ENCODE measurements at regions of chr1 and their contacts with region 1.

Region 1: GRCh38 chr1:165597883-165598675 is 33.0 kb upstream of the MGST3 start:
- DNase-seq: peak; percentile 71 to 93 (median 79)
- ATAC-seq: peak; percentile 98
- H3K4me3 ChIP-seq: peak overlapping the region; percentile 70
- H3K4me3 Mint-ChIP-seq: peak overlapping the region; percentile 86 to 95 (median 92)
- H3K27ac ChIP-seq: peak overlapping the region; percentile 31
- H3K27ac Mint-ChIP-seq: peak overlapping the region in 8 of 9 donors; percentile 28 to 94 (median 85)
- H3K4me1 ChIP-seq: peaks cover 11 to 12% of the 10 kb centered on the region in 2 donors
- H3K4me1 Mint-ChIP-seq: peaks cover 21 to 28% (median 26%) of the 10 kb centered on the region in 7 donors
- H3K27me3 ChIP-seq: peaks cover 6 to 16% of the 10 kb centered on the region in 2 donors
- H3K27me3 Mint-ChIP-seq: peaks cover 24 to 55% (median 47%) of the 10 kb centered on the region in 5 donors

Region 2: DNA sequence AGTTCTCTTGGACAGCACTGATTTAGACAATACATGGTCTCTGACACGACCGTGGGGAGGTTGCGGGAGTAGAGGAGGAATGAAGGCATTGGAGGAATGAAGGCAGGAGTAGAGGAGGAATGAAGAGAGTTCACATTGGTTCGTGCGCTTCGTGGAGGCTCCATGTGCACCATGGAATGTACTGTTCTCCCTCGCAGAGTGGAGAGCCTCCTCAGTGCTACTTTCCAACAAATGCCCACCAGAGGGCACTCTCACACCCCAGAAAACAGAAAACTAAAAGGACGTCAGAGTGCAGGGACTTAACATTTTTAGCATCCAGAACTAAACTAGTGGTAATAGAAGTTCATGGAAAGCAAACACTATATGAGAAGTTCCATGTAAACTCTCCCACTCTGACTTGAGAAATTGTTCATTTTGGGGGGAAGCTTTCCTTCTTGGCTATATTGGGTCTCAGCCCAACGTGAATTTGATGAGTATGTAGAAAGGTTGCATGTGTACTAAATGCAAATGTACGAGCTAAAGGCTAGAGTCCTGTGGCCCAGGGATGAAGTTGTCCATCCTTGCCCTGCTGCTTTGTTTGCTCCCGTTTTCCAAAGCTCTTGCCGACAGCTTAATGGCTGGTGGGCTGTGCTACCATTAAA is 453.2 kb before region 1 on chr1:
- CTCF ChIA-PET with region 1: interaction called, 4 read pairs
- POLR2A ChIA-PET with region 1: no interaction called
- intact Hi-C with region 1: loop called in 1 of 2 experiments (anchors 1 kb)
- DNase-seq: peak in 1 of 9 donors; percentile 1
- ATAC-seq: no peak
- H3K4me3 ChIP-seq: no peak overlapping the region
- H3K4me3 Mint-ChIP-seq: no peak overlapping the region
- H3K27ac ChIP-seq: no peak overlapping the region
- H3K27ac Mint-ChIP-seq: no peak overlapping the region
- H3K4me1 ChIP-seq: no peaks in the 10 kb centered on the region
- H3K4me1 Mint-ChIP-seq: peaks cover 0 to 4% (median 0%) of the 10 kb centered on the region in 7 donors
- H3K27me3 ChIP-seq: no peaks in the 10 kb centered on the region
- H3K27me3 Mint-ChIP-seq: peaks cover 0 to 16% (median 11%) of the 10 kb centered on the region in 5 donors

Region 3: GRCh38 chr1:165392634-165393571 is 205.2 kb before region 1 on chr1:
- CTCF ChIA-PET with region 1: interaction called, 127 read pairs
- POLR2A ChIA-PET with region 1: interaction called, 7 read pairs
- intact Hi-C with region 1: loop called (anchors 1 kb)
- DNase-seq: peak; percentile 78 to 94 (median 91)
- ATAC-seq: peak; percentile 100
- H3K4me3 ChIP-seq: peak overlapping the region; percentile 28
- H3K4me3 Mint-ChIP-seq: peak overlapping the region; percentile 59 to 84 (median 75)
- H3K27ac ChIP-seq: no peak overlapping the region
- H3K27ac Mint-ChIP-seq: peak overlapping the region; percentile 45 to 94 (median 90)
- H3K4me1 ChIP-seq: peaks cover 13 to 14% of the 10 kb centered on the region in 2 donors
- H3K4me1 Mint-ChIP-seq: peaks cover 17 to 35% (median 26%) of the 10 kb centered on the region in 7 donors
- H3K27me3 ChIP-seq: peaks cover 7 to 21% of the 10 kb centered on the region in 2 donors
- H3K27me3 Mint-ChIP-seq: peaks cover 59 to 93% (median 80%) of the 10 kb centered on the region in 5 donors

Region 4: DNA sequence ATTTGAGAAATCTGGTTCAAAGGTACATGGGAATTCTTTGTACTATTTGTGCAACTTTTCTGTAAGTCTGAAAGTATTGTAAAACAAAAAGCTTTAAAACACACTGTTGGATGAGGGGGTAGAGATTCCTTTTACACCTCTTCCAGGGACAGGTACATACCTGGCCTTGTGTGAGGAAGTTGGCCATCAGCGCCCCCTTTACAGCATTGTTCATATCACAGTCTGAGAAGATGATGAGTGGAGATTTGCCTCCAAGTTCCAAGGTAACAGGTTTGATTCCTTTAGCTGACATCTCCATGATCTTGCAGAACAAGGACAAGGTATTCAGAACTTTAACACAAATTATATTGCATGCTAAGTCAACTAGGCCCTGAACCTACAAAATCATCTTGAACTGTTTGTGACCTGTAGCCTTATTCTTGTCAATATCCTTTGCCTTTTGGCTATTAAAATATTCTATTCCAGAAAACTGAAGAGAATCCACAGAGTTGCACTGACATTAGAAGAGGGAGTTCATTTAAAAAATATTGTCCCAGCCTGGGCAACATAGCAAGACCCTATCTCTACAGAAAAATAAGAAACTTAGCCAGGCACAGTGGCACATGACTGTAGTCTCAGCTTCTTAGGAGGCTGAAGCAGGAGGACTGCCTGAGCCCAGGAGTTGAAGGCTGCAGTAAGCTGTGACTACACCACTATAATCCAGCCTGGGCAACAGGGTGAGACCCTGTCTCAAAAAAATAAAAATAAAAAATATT is 81.4 kb after region 1 on chr1:
- CTCF ChIA-PET with region 1: no interaction called
- POLR2A ChIA-PET with region 1: no interaction called
- intact Hi-C with region 1: loop called in 1 of 2 experiments (anchors 2 kb)
- DNase-seq: no peak
- ATAC-seq: no peak
- H3K4me3 ChIP-seq: no peak overlapping the region
- H3K4me3 Mint-ChIP-seq: no peak overlapping the region
- H3K27ac ChIP-seq: no peak overlapping the region
- H3K27ac Mint-ChIP-seq: peak overlapping the region in 8 of 9 donors; percentile 13 to 87 (median 76)
- H3K4me1 ChIP-seq: peaks cover 0 to 8% of the 10 kb centered on the region in 2 donors
- H3K4me1 Mint-ChIP-seq: peaks cover 13 to 43% (median 39%) of the 10 kb centered on the region in 7 donors
- H3K27me3 ChIP-seq: no peaks in the 10 kb centered on the region
- H3K27me3 Mint-ChIP-seq: no peaks in the 10 kb centered on the region

Region 5: GRCh38 chr1:165768513-165769394 is 170.7 kb after region 1 on chr1 and contains the start of gene TMCO1:
- CTCF ChIA-PET with region 1: no interaction called
- POLR2A ChIA-PET with region 1: interaction called, 3 read pairs
- intact Hi-C with region 1: loop called (anchors 1 to 2 kb)
- DNase-seq: peak; percentile 76 to 97 (median 94)
- ATAC-seq: peak; percentile 98
- H3K4me3 ChIP-seq: peak within 1 kb of the TSS; percentile 94
- H3K4me3 Mint-ChIP-seq: peak within 1 kb of the TSS; percentile 90 to 100 (median 97)
- H3K27ac ChIP-seq: peak within 1 kb of the TSS; percentile 85
- H3K27ac Mint-ChIP-seq: peak within 1 kb of the TSS; percentile 91 to 100 (median 98)
- H3K4me1 ChIP-seq: peaks cover 19 to 32% of the 10 kb centered on the region in 2 donors
- H3K4me1 Mint-ChIP-seq: peaks cover 44 to 83% (median 68%) of the 10 kb centered on the region in 7 donors
- H3K27me3 ChIP-seq: no peaks in the 10 kb centered on the region
- H3K27me3 Mint-ChIP-seq: no peaks in the 10 kb centered on the region
- total RNA-seq, gene TMCO1: 30.4 to 97.1 (median 49.8) TPM

Region 6: DNA sequence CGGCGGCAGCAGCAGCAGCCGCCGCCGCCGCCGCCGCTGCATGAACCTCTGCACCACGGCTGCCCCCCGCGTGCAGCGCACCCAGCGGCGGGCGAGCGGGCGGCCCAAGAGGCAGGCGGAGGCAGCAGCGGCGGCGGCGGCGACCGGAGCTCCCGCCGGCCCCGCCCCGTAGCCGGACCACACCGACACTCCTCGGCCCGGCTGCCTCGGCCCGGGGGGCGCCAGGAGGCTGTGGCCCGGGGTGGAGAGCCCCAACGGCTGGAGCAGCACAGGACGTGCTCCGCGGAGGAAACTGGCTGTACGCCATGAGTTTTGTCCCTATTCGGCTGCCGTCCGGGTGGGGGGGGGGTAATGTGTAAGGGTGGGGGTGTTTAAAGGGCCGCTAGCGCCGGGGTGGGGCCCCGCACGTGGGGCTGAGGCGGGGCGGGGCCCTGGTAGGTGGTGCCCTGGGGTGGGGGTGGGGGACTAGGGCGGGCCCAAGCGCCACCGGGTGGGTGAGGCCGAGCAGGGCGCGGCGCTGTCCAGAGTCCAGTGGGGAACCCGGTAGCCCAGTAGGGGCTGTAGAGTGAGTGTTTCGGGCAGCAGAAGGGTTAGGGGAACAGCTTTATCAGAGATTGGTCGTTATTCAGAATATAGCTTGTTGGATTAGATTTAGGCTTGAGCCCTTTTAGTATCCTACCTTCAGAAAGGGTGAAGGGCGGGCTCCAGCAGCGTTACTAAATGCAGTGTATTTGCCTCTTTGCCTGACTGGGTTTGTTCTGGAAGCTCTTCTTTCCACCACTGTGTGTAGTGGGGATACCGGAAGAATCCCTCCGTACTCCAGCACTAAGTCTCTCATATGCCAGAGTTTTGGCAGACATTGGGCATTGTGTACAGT is 568.9 kb after region 1 on chr1 and contains the start of gene FAM78B:
- CTCF ChIA-PET with region 1: no interaction called
- POLR2A ChIA-PET with region 1: no interaction called
- intact Hi-C with region 1: loop called in 1 of 2 experiments (anchors 10 kb)
- DNase-seq: peak in 7 of 9 donors; percentile 5 to 59 (median 25)
- ATAC-seq: peak; percentile 67
- H3K4me3 ChIP-seq: no peak within 1 kb of the TSS
- H3K4me3 Mint-ChIP-seq: peak within 1 kb of the TSS; percentile 62 to 85 (median 78)
- H3K27ac ChIP-seq: no peak within 1 kb of the TSS
- H3K27ac Mint-ChIP-seq: no peak within 1 kb of the TSS
- H3K4me1 ChIP-seq: peaks cover 0 to 7% of the 10 kb centered on the region in 2 donors
- H3K4me1 Mint-ChIP-seq: peaks cover 4 to 25% (median 21%) of the 10 kb centered on the region in 7 donors
- H3K27me3 ChIP-seq: peaks cover 0 to 4% of the 10 kb centered on the region in 2 donors
- H3K27me3 Mint-ChIP-seq: peaks cover 32 to 61% (median 48%) of the 10 kb centered on the region in 5 donors
- total RNA-seq, gene FAM78B: 0.45 to 0.58 TPM in 2 of 5 experiments, not detected in the others